ENCODE measurements at regions of chr6 and their contacts with region 1.

Region 1: DNA sequence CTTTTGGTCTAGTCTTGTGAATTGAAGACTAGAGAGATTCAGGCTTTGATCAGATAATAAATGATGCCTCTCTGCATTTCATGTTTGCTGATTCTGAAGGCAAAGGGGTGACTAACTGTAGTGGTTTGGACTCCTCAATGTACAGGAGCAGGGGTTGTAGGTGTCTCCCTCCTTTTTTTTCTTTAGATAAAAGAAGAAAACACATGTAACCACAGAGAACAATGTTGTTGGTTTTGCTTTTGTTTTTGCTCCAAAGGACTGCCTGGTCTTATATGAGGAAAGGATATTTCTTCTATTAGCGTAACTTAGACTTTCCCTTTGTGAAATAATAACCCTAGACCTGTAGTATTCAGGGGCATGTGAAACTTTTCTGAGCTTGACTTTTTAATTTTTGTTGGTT is 53.2 kb downstream of the RFPL4B start:
- DNase-seq: no peak
- CTCF ChIP-seq: no peak

Region 2: DNA sequence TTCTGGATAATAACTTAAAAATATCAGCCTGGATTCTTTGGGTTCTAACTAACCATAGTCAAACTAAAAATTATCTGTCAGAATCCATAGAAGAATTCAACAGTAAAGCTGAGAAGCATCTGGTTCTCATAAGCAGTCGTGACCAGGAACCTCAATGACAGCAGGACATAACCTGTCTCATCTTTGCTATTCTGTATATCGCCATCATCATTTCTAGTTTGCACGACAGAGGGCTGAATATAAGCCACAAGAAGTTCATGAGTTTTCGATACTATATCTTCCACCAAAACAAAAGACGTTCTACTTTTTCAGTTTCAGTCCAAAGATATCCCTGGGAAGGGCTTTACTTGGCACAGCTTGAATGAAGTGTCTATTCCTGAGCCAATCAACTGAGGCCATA is 10.4 kb before region 1 on chr6:
- CTCF ChIA-PET with region 1: interaction called, 16 read pairs
- POLR2A ChIA-PET with region 1: interaction called, 3 read pairs
- DNase-seq: no peak
- CTCF ChIP-seq: no peak

Region 3: DNA sequence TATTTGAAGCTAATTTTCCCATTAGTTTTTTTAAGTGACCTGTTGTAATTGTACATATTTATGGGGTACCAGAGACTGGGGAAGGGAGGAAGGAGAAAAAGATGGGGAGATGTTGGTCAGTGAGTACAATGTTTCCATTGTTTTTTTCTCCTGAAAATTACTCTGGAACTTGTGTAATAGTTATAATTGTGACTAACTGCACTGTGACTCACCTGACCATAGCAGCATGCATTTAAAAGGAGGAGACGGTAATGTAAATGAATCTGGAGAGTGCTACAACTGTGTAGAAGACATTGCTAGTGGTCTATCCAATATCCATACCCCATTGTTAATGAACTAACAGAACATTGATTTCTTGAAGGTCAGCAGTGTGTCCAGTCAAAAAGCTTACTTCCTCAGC is 80.3 kb after region 1 on chr6:
- CTCF ChIA-PET with region 1: no interaction called
- POLR2A ChIA-PET with region 1: no interaction called
- DNase-seq: no peak
- CTCF ChIP-seq: no peak